ENCODE measurements at regions of chr14 and their contacts with region 1.

Region 1: GRCh38 chr14:36941783-36942521 is 230.5 kb downstream of the SLC25A21 start:
- DNase-seq: peak; percentile 62
- ATAC-seq: no peak
- H3K4me3 Mint-ChIP-seq: no peak overlapping the region
- H3K27ac Mint-ChIP-seq: no peak overlapping the region
- H3K4me1 Mint-ChIP-seq: no peaks in the 10 kb centered on the region
- H3K27me3 Mint-ChIP-seq: no peaks in the 10 kb centered on the region

Region 2: DNA sequence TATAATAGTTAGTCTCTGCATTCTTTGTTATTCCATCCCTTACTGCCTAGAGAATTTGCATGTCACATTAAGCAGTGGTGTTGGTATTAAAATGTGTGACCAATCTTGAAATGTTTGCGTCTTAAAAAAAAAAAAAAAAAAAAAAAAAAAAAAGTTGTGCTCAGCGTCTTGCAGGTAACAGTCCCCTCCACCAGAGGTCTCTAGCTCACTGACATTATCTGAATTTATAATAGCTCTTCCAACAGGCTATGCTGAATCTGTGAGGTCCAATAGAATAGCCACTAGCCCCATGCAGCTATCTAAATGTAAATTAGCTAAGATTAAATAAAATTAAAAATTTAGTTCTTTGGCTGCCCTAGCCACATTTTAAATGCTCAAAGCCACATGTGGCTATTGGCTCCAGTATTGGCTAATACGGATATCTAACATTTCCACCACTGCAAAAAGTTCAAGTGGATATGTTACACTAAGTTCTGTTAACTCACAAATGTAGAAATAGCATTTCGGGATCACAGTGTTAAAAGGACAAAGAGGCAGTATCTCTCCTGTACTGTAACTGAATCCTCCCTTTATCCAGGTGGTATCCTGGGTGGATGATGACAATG is 388.2 kb before region 1 on chr14:
- CTCF ChIA-PET with region 1: interaction called, 33 read pairs
- POLR2A ChIA-PET with region 1: no interaction called
- DNase-seq: peak; percentile 22
- ATAC-seq: no peak
- H3K4me3 Mint-ChIP-seq: no peak overlapping the region
- H3K27ac Mint-ChIP-seq: no peak overlapping the region
- H3K4me1 Mint-ChIP-seq: no peaks in the 10 kb centered on the region
- H3K27me3 Mint-ChIP-seq: no peaks in the 10 kb centered on the region

Region 3: DNA sequence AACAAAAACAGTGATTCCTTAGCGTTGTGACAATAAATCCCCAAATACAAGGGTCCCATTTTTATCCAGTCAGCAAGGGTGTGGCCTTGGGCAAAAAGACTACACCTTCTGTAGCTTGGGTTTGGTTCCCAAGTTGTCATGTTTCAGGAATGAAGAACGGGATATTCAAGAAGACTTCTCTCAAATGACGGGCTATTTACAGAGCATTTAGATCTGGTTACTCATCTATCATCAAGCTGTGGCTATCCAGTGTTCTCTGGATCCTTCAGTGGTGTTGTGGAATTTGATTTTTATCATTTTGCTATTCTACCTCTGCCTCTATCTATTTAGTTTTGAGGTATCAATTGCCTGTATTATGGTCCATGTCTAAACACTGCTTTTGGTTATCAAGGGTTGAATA is 10.8 kb after region 1 on chr14:
- CTCF ChIA-PET with region 1: interaction called, 17 read pairs
- POLR2A ChIA-PET with region 1: no interaction called
- DNase-seq: no peak
- ATAC-seq: no peak
- H3K4me3 Mint-ChIP-seq: no peak overlapping the region
- H3K27ac Mint-ChIP-seq: no peak overlapping the region
- H3K4me1 Mint-ChIP-seq: no peaks in the 10 kb centered on the region
- H3K27me3 Mint-ChIP-seq: no peaks in the 10 kb centered on the region

Region 4: GRCh38 chr14:36975835-36976234 is 33.9 kb after region 1 on chr14:
- CTCF ChIA-PET with region 1: no interaction called
- POLR2A ChIA-PET with region 1: no interaction called
- DNase-seq: no peak
- ATAC-seq: no peak
- H3K4me3 Mint-ChIP-seq: no peak overlapping the region
- H3K27ac Mint-ChIP-seq: no peak overlapping the region
- H3K4me1 Mint-ChIP-seq: no peaks in the 10 kb centered on the region
- H3K27me3 Mint-ChIP-seq: no peaks in the 10 kb centered on the region

Measured in activated CD8-positive, alpha-beta T cell treated with anti-CD3 and anti-CD28 coated beads, Interleukin-2, amount 10 ng/mL, durations not matched to agents 7 days and 5 days (primary cell).